Left colon (tissue), 2 donors: ENCODE measurements at regions of chr17 and their contacts with region 1.

Region 1: DNA sequence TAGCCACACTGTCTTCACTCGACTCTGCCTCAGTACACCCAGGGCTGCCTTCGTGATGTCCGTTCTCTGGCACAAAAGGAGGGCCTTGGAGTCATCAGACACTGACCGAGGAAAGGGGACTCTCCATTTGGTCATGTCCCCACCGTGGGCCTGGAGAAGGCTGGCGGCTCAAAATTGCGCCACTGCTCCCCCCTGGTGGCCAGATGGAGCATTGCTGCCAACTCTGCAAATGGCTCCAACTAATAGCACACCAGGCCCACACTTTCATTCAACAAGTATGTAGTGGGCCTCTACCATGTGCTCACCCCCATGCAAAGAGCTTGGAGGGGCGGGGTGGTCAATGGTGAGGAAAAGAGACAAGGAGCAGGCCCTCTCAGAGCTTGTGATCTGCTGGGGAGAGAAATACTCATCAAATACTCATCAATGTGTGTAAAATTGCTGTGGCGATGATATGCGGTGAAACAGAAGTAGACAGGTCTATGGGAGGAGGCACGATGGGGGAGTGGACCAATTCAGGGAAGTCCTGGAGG is 5.2 kb upstream of the GRIN2C start:
- DNase-seq: peak in 1 of 2 donors; percentile 81
- ATAC-seq: peak; percentile 58

Region 2: DNA sequence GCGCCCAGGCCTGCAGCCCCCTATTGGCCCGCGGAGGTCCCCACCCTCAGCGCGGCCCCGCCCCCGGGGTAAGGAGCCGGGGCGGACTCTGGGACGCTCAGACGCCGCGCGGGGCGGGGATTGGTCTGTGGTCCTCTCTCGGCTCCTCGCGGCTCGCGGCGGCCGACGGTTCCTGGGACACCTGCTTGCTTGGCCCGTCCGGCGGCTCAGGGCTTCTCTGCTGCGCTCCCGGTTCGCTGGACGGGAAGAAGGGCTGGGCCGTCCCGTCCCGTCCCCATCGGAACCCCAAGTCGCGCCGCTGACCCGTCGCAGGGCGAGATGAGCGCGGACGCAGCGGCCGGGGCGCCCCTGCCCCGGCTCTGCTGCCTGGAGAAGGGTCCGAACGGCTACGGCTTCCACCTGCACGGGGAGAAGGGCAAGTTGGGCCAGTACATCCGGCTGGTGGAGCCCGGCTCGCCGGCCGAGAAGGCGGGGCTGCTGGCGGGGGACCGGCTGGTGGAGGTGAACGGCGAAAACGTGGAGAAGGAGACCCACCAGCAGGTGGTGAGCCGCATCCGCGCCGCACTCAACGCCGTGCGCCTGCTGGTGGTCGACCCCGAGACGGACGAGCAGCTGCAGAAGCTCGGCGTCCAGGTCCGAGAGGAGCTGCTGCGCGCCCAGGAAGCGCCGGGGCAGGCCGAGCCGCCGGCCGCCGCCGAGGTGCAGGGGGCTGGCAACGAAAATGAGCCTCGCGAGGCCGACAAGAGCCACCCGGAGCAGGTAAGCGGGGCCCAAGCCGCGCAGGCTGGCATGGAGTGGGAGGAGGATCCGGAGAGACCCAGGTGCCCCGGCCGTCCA is 116.2 kb before region 1 on chr17 and contains the start of gene NHERF1:
- intact Hi-C with region 1: loop called (anchors 5 kb)
- DNase-seq: peak; percentile 92 to 96
- ATAC-seq: peak; percentile 73
- total RNA-seq, gene NHERF1: 186 to 256 TPM

Region 3: GRCh38 chr17:74790161-74791054 is 74.5 kb before region 1 on chr17:
- intact Hi-C with region 1: loop called (anchors 5 to 10 kb)
- DNase-seq: no peak
- ATAC-seq: no peak

Region 4: GRCh38 chr17:74798239-74798707 is 66.7 kb before region 1 on chr17:
- intact Hi-C with region 1: loop called (anchors 5 to 10 kb)
- DNase-seq: no peak
- ATAC-seq: no peak

Region 5: DNA sequence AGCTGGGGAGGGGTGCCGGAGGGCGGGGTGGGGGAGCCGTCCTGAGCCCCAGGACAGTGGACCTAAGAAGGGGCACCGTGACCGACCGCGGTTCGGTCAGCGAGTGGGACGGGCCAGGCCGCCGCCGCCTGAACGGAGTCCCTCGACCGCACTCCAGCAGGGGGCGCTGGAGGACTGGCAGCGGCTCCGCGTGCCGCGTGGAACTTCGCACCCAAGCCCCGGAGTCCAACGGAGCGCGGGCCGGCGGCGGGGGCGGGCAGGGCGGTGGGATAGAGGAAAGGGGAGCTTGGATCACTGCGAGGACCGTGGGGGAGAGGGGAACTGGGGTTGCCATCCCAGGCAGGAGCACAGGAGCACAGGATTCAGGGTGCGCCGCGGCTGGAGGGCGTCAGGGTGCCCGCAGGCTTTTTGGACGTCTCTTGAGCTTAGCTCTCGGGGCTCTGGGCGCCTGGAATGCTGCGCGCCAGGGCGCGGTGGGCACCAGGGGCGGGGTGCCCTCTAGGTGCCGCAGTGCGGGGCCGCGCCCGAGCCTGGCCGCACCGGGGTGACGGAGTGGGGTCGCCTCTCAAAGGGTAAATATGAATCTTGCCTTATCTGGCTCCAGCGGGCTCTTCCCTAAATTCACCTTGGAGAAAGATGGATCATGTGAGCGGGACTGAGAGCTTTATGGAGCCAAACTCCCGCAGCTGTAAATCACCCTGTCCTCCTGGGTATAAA is 58.8 kb after region 1 on chr17:
- intact Hi-C with region 1: no loop called
- DNase-seq: peak; percentile 41 to 84
- ATAC-seq: peak; percentile 82

Region 6: DNA sequence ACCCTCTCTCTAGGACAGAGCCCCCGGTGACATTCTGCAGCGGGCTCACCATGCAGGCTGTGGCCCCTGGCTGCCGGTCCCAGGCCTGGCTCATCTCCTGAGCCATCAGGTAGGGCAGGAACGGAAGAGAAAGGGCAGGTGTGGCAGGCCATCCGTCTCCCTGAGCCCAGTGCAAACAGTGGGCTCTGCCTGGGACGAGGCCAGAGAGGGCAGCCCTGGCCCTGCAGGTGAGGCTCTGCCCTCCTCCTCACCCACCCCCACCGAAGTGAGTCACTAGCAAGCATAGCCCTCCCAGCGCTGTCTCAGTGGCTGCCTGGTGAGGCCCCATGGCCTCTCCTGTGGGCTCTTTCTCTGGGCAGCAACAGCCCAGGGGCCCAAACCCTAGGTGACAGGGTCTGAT is 85.3 kb after region 1 on chr17:
- intact Hi-C with region 1: no loop called
- DNase-seq: no peak
- ATAC-seq: peak; percentile 6